Left ventricle myocardium inferior (tissue), 1 donor: ENCODE measurements at regions of chr15 and their contacts with region 1.

Region 1: DNA sequence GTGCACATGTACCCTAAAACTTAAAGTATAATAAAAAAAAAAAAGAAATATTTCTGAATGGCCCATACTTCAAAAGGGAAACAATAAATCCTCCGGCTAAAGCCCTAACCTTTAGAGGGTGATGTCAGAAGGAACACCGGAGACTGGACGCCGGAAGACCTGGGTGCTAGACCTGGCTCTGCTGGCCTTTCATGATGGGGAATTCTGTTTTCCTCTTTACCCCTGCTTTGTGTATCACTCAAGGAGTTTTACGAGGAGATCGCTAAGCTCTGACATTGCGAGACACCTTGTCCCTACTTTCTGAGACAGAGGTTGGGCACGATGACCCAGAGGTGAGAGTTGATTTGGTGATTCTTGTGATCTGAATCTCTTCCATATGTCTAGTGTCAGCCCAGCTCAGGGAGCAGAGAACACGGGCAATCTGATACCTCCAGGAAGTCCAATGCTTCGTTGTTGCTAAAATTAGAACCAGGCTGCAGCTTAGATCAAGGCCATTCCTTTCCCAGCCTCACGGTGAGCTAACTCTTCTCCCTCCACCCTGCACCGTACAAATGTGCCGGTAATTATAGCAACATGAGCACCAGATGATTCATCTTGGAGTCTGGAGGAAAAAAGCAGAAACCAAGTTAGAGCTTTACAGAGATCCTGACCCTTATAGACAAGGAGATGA is 42.0 kb upstream of the CFAP161 start:
- DNase-seq: no peak
- H3K4me3 ChIP-seq: peak overlapping the region; percentile 37
- H3K27ac ChIP-seq: peak overlapping the region; percentile 85
- H3K4me1 ChIP-seq: peaks cover 39% of the 10 kb centered on the region
- H3K27me3 ChIP-seq: no peaks in the 10 kb centered on the region
- CTCF ChIP-seq: no peak

Region 2: DNA sequence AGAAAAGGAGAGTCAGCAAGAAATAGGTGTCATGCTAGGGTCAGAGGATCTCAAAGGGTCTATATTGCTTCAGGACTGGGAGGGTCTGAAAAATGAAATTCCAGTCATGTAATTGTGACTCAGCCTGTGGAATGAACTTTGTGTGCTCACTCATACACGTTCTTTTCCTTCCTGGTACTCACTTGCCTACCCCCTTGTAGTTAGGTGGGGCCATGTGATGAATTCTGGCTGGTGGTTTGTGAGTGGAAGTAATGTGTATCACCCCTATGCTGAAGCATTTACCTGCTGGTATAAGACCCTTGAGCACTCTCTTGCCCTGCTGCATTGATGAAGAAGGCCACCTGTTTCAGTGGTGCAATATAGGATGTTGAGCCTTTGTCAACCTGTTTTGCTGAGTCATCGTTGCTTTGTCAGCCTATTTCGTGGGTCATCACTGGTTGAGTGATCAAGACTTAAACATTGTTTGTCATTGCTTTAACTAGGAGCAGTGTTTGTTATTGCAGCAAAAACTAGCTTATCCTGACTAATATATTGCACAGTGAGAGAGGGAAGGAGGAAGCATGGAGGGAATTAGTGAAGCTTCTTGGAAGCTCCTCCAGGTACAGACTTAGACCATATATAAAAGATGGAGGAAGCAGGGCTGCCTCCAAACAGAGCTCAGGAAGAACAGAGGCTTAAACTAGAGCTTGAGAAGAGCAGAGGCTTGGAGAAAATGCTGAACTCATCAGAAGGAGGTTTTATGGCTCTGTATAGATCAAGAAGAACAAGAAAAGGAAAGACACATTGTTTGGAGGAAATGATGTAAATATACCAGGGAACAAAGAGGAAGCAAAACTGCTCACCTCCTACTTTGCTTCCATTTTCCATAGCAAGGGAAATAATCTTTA is 62.4 kb before region 1 on chr15:
- intact Hi-C with region 1: loop called (anchors 10 kb)
- DNase-seq: no peak
- H3K4me3 ChIP-seq: no peak overlapping the region
- H3K27ac ChIP-seq: peak overlapping the region; percentile 55
- H3K4me1 ChIP-seq: peaks cover 73% of the 10 kb centered on the region
- H3K27me3 ChIP-seq: no peaks in the 10 kb centered on the region
- CTCF ChIP-seq: no peak

Region 3: GRCh38 chr15:81216422-81216821 is 124.4 kb after region 1 on chr15:
- intact Hi-C with region 1: no loop called
- DNase-seq: peak; percentile 33
- H3K4me3 ChIP-seq: no peak overlapping the region
- H3K27ac ChIP-seq: no peak overlapping the region
- H3K4me1 ChIP-seq: peaks cover 15% of the 10 kb centered on the region
- H3K27me3 ChIP-seq: no peaks in the 10 kb centered on the region
- CTCF ChIP-seq: no peak